PC-9 (cell line): ENCODE measurements at regions of chr2 and their contacts with region 1.

Region 1: DNA sequence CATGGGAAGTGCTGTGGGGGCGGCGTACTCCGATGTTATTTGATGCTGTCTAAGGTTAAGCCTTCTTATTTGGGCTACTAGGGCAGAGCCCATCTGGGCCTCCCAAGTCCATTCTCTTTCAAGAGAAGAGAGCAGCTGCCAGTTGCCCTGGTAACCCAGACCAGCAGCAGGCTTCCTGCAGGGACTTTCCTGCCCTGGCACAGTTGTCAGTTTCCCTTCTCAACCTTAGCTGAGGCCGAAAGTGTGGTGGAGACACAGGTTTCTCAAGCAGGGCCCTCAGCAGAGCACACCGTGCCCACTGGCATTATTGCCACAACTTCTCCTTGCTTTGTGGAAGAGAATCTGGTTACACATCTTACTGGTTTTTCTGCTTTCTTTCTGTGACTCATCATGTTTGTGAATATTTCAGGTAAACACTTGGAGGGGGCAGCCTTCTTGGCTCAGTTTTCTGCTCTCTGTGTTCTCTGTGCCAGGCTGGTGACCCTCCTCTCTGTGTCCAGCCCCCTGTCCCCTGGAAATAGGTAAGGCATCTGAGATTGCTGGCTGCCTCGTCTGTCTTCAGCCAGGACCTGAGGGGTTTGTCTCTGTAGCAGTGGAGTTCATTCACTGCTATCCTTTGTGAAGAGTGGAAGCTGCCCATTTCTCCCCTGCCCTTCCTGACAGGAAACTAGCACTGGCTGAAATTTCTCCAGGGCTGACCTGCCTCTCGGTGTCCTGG is 111.0 kb downstream of the B3GNT2 start:
- DNase-seq: peak; percentile 81 to 99
- H3K4me3 ChIP-seq: peak overlapping the region; percentile 46
- H3K27ac ChIP-seq: peak overlapping the region; percentile 99
- H3K4me1 ChIP-seq: peaks cover 63% of the 10 kb centered on the region
- H3K27me3 ChIP-seq: no peaks in the 10 kb centered on the region
- CTCF ChIP-seq: no peak

Region 2: DNA sequence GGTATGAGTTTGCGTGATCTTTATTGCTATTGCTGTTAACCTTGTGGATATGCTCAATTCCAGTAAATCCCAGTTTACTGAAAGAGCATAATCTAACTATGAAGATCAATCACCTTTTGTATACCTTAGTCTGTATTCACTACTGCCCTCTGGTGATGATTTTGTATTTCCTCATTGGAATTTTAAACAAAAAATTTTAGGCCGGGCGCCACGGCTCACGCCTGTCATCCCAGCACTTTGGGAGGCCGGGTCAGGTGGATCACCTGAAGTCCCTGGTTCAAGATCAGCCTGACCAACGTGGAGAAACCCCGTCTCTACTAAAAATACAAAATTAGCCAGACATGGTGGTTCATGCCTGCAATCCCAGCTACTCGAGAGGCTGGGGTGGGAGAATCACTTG is 396.3 kb before region 1 on chr2:
- CTCF ChIA-PET with region 1: no interaction called
- POLR2A ChIA-PET with region 1: no interaction called
- intact Hi-C with region 1: loop called (anchors 10 kb)
- DNase-seq: peak in 1 of 2 experiments; percentile 17
- H3K4me3 ChIP-seq: no peak overlapping the region
- H3K27ac ChIP-seq: no peak overlapping the region
- H3K4me1 ChIP-seq: peaks cover 13% of the 10 kb centered on the region; the same call in 1 of the 2 replicates
- H3K27me3 ChIP-seq: no peaks in the 10 kb centered on the region
- CTCF ChIP-seq: peak; percentile 57

Region 3: GRCh38 chr2:62195421-62196277 is 111.3 kb before region 1 on chr2 and contains the start of gene B3GNT2:
- CTCF ChIA-PET with region 1: no interaction called
- POLR2A ChIA-PET with region 1: no interaction called
- intact Hi-C with region 1: loop called (anchors 1 kb)
- DNase-seq: peak; percentile 56 to 82
- H3K4me3 ChIP-seq: peak within 1 kb of the TSS; percentile 98
- H3K27ac ChIP-seq: peak within 1 kb of the TSS; percentile 70
- H3K4me1 ChIP-seq: peaks cover 29% of the 10 kb centered on the region
- H3K27me3 ChIP-seq: no peaks in the 10 kb centered on the region
- CTCF ChIP-seq: no peak
- total RNA-seq, gene B3GNT2: 30.8 and 30.9 TPM in 2 replicates

Region 4: GRCh38 chr2:62234755-62235655 is 71.9 kb before region 1 on chr2:
- CTCF ChIA-PET with region 1: no interaction called
- POLR2A ChIA-PET with region 1: no interaction called
- intact Hi-C with region 1: no loop called
- DNase-seq: no peak
- H3K4me3 ChIP-seq: no peak overlapping the region
- H3K27ac ChIP-seq: no peak overlapping the region
- H3K4me1 ChIP-seq: no peaks in the 10 kb centered on the region
- H3K27me3 ChIP-seq: no peaks in the 10 kb centered on the region
- CTCF ChIP-seq: no peak

Region 5: DNA sequence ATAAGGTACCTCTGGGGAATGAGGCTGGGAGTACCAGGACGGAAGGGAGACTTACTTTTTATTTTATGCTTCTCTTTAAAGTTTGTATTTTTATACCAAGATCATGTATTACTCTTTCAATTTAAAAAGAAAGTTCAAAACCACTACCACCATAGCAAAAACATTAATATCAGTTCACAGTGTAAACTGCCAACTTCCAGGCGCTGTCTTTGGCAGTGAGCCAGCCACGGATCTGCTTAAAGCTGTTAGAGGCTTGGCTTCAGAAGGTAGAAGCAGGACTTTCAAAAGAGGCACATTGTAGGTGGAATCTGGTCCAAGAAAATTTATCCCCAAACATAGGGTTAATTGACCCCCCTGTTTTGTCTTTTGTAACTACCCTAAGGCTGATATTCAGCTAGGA is 36.2 kb before region 1 on chr2:
- CTCF ChIA-PET with region 1: no interaction called
- POLR2A ChIA-PET with region 1: no interaction called
- intact Hi-C with region 1: no loop called
- DNase-seq: peak in 1 of 2 experiments; percentile 19
- H3K4me3 ChIP-seq: no peak overlapping the region
- H3K27ac ChIP-seq: no peak overlapping the region
- H3K4me1 ChIP-seq: no peaks in the 10 kb centered on the region
- H3K27me3 ChIP-seq: no peaks in the 10 kb centered on the region
- CTCF ChIP-seq: no peak

Region 6: GRCh38 chr2:62354771-62355550 is 48.1 kb after region 1 on chr2:
- CTCF ChIA-PET with region 1: no interaction called
- POLR2A ChIA-PET with region 1: no interaction called
- intact Hi-C with region 1: loop called (anchors 1 kb)
- DNase-seq: peak; percentile 71 to 95
- H3K4me3 ChIP-seq: peak overlapping the region; percentile 6; the same call in 1 of the 2 replicates
- H3K27ac ChIP-seq: peak overlapping the region; percentile 59
- H3K4me1 ChIP-seq: peaks cover 33% of the 10 kb centered on the region
- H3K27me3 ChIP-seq: no peaks in the 10 kb centered on the region
- CTCF ChIP-seq: no peak

Region 7: GRCh38 chr2:62415019-62415431 is 108.1 kb after region 1 on chr2:
- CTCF ChIA-PET with region 1: interaction called, 8 read pairs
- POLR2A ChIA-PET with region 1: no interaction called
- intact Hi-C with region 1: loop called (anchors 1 kb)
- DNase-seq: no peak
- H3K4me3 ChIP-seq: no peak overlapping the region
- H3K27ac ChIP-seq: no peak overlapping the region
- H3K4me1 ChIP-seq: peaks cover 25% of the 10 kb centered on the region
- H3K27me3 ChIP-seq: no peaks in the 10 kb centered on the region
- CTCF ChIP-seq: no peak

Region 8: DNA sequence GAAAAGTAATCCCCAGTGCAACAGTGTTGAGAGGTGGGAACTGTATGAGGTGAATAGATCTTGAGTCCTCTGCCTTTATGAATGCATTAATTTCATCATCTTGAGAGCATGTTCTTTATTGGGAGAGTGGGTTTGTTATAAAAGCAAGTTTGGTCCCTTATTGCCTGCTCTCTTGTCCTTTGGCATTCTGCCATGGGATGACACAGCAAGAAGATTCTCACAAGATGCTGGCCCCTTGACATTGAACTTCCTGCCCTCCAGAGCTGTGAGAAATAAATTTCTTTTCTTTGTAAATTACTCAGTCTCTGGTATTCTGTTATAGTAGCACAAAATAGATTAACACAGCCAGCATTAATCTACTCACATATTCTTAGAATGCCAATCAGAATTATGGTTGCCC is 507.2 kb after region 1 on chr2:
- CTCF ChIA-PET with region 1: no interaction called
- POLR2A ChIA-PET with region 1: no interaction called
- intact Hi-C with region 1: no loop called
- DNase-seq: no peak
- H3K4me3 ChIP-seq: no peak overlapping the region
- H3K27ac ChIP-seq: no peak overlapping the region
- H3K4me1 ChIP-seq: no peaks in the 10 kb centered on the region
- H3K27me3 ChIP-seq: no peaks in the 10 kb centered on the region
- CTCF ChIP-seq: no peak